Esophagus muscularis mucosa (tissue), 4 donors: ENCODE measurements at regions of chr1 and their contacts with region 1.

Region 1: DNA sequence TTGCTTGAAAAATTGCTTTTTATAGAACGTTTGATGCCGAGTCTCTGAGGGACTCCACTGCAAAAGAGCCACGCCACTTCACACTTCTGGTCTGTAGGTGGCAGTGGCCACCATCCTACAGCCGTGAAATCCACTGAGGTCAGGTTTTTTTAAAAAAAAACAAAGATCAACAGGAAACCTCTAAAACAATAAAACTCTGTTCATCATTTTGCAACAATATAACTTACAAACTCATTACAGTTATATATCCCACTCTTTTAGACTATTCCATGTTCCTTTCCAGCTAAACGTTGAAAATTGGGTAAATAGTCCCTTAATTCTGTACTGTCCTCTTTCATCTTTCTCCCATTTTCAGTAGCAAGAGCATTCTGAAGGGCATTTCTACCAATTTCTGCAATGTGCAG is 64.6 kb upstream of the FMN2 start:
- DNase-seq: no peak
- H3K4me3 ChIP-seq: no peak overlapping the region
- H3K27ac ChIP-seq: no peak overlapping the region
- H3K4me1 ChIP-seq: no peaks in the 10 kb centered on the region
- H3K27me3 ChIP-seq: no peaks in the 10 kb centered on the region
- CTCF ChIP-seq: peak; percentile 74 to 83 (median 76)
- EP300 ChIP-seq: no peak
- POLR2A ChIP-seq: no peak

Region 2: DNA sequence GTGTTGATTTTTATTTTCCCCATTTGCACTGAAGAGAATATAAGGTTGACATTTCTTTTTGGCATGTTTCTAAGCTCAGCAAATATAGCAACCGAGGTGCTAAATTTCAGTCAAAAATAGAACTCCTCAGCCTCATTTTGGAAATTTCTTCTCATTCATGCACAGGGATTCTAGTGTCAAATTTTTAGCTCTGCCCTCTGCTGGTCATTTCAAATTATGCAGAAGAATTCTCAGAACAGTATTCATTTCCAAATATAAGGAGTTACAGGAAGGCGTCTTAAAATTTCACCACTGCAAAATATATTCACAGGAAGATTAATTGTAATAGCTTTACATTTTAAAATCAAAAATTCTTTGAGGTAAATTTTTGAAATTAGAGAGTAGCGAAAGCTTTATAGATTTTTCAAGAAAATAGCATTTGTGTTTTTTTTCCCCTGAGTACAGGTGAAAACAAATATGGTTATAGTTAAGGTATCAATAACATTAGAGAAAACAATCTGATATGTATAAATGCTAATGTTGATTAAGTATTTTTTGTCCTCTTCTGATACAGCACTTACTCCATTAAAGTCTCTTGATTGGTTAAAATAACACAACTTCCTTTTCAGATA is 122.5 kb after region 1 on chr1:
- intact Hi-C with region 1: loop called (anchors 5 kb)
- DNase-seq: no peak
- H3K4me3 ChIP-seq: no peak overlapping the region
- H3K27ac ChIP-seq: no peak overlapping the region
- H3K4me1 ChIP-seq: no peaks in the 10 kb centered on the region
- H3K27me3 ChIP-seq: no peaks in the 10 kb centered on the region
- CTCF ChIP-seq: peak; percentile 35 to 75 (median 41)
- EP300 ChIP-seq: no peak
- POLR2A ChIP-seq: no peak